HCT116 (cell line): ENCODE measurements at regions of chr10 and their contacts with region 1.

Region 1: GRCh38 chr10:122648599-122649428 is 50.8 kb downstream of the C10orf120 start:
- DNase-seq: peak; percentile 49
- ATAC-seq: peak; percentile 89
- H3K4me3 ChIP-seq: no peak overlapping the region
- H3K27ac ChIP-seq: no peak overlapping the region
- H3K4me1 ChIP-seq: no peaks in the 10 kb centered on the region
- H3K27me3 ChIP-seq: peaks cover 65% of the 10 kb centered on the region
- CTCF ChIP-seq: peak; percentile 84 to 96 (median 95); a peak in 5 of 6 replicates
- POLR2A ChIP-seq: no peak
- RAD21 ChIP-seq: peak; percentile 85

Region 2: DNA sequence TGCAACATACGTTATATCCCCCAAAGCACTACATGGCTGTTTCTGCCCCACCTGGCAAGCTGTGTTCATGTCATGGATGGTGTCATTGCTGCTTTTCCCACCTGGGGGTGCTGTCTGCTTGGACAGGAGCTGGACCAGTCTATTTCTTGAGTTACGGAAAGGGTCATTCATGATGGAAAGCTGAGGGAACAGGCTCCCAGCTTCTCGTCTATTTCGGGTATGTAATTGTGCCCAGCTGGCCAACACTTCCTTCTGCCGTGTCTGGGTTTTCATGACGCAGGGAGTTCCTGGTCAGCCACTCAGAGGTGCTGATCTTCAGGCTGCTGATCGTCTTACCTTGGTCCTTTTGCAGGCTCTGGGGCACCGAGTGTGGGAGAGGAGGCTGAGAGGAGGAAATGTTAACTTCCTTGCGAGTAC is 369.1 kb before region 1 on chr10:
- CTCF ChIA-PET with region 1: interaction called, 14 read pairs
- POLR2A ChIA-PET with region 1: no interaction called
- RAD21 ChIA-PET with region 1: no interaction called
- intact Hi-C with region 1: no loop called
- DNase-seq: peak; percentile 70
- ATAC-seq: peak; percentile 87
- H3K4me3 ChIP-seq: no peak overlapping the region
- H3K27ac ChIP-seq: no peak overlapping the region
- H3K4me1 ChIP-seq: peaks cover 3 to 15% of the 10 kb centered on the region in 2 experiments; a peak in 3 of 4 replicates
- H3K27me3 ChIP-seq: no peaks in the 10 kb centered on the region
- CTCF ChIP-seq: peak; percentile 88 to 98 (median 97); a peak in 5 of 6 replicates
- POLR2A ChIP-seq: no peak
- RAD21 ChIP-seq: peak; percentile 98

Region 3: DNA sequence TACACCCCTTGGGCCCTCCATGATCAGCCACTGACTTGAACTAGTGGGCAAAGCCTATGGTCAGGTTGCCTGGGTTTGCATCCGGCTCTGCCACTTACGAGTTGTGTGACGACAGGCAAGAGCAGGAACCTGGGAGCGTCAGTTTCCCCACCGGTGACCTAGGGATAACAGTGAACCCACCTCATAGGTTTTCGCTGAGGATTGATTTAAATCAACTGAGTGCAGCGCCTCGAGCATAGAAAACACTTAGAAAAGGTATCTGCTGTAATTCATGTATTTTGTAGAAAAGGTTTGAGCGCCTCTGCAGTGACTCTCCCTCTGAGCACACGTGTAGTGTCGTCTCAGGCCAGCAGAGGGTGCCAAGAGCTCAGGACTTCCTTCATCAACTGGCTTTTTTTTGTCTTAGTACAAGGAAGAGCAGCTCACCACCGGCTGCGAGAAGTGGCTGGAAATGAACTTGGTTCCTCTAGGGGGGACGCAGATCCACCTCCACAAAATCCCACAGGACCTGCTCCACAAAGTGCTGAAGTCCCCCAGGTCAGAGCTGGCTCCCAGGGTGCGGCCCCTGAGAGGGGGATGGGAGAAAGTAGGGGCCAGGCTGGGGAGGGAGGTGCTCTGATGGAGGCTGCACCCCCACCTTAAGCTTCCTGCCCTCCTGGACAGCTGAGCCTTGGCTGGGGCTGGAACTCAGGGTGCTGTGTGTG is 350.1 kb before region 1 on chr10:
- CTCF ChIA-PET with region 1: interaction called, 4 read pairs
- POLR2A ChIA-PET with region 1: no interaction called
- RAD21 ChIA-PET with region 1: no interaction called
- intact Hi-C with region 1: loop called (anchors 2 kb)
- DNase-seq: peak; percentile 73
- ATAC-seq: peak; percentile 95
- H3K4me3 ChIP-seq: peak overlapping the region; percentile 22 to 35
- H3K27ac ChIP-seq: no peak overlapping the region; the same call in 1 of the 2 replicates
- H3K4me1 ChIP-seq: peaks cover 0 to 18% of the 10 kb centered on the region in 2 experiments; a peak in 2 of 4 replicates
- H3K27me3 ChIP-seq: no peaks in the 10 kb centered on the region
- CTCF ChIP-seq: peak; percentile 94 to 99 (median 98)
- POLR2A ChIP-seq: no peak
- RAD21 ChIP-seq: peak; percentile 100

Region 4: GRCh38 chr10:122688293-122688994 is 39.6 kb after region 1 on chr10:
- CTCF ChIA-PET with region 1: interaction called, 14 read pairs
- POLR2A ChIA-PET with region 1: no interaction called
- RAD21 ChIA-PET with region 1: no interaction called
- intact Hi-C with region 1: no loop called
- DNase-seq: no peak
- ATAC-seq: peak; percentile 17; the same call in 1 of the 2 replicates
- H3K4me3 ChIP-seq: no peak overlapping the region
- H3K27ac ChIP-seq: no peak overlapping the region
- H3K4me1 ChIP-seq: no peaks in the 10 kb centered on the region
- H3K27me3 ChIP-seq: peaks cover 73% of the 10 kb centered on the region
- CTCF ChIP-seq: peak in 1 of 3 experiments; percentile 15; a peak in 1 of 6 replicates
- POLR2A ChIP-seq: no peak
- RAD21 ChIP-seq: peak; percentile 40

Region 5: DNA sequence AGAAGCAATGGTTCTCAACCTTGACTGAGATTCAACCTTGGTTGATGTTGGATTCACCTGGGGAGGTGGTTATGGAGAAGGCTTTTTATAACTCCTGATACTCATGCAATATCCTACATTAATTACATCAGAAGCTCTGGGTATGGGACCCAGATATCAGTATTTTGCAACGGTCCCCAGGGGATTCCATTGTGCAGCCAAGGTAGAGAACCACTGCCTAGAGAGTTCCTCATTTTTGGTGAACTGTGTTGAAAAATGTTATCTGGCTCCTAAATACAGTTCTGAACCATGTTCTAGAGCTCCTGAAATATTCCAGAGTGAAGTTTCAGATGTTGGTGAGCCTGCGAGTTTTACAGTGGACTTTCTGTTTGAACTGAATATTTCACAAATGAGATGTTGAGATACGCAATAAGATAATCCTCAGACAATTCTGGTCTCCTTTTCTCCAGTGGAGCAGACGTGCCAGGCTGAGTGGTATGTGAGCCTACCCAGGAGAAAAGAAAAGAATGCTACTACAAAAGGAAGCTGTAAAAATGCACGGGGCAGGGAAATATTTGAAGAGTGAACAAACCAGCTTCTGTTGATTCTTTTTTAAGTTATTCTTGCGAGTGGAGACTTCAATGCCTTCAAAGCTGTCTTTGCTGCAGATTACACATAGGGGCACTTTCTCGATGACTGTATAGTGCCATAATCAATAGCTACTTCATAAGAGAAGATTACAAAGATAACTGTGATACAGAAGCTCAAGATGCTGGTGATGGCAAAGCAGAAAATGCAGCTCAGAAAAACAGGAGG is 64.5 kb after region 1 on chr10:
- CTCF ChIA-PET with region 1: no interaction called
- POLR2A ChIA-PET with region 1: no interaction called
- RAD21 ChIA-PET with region 1: no interaction called
- intact Hi-C with region 1: no loop called
- DNase-seq: no peak
- ATAC-seq: no peak
- H3K4me3 ChIP-seq: no peak overlapping the region
- H3K27ac ChIP-seq: no peak overlapping the region
- H3K4me1 ChIP-seq: no peaks in the 10 kb centered on the region
- H3K27me3 ChIP-seq: peaks cover 97% of the 10 kb centered on the region
- CTCF ChIP-seq: no peak
- POLR2A ChIP-seq: no peak
- RAD21 ChIP-seq: no peak

Region 6: DNA sequence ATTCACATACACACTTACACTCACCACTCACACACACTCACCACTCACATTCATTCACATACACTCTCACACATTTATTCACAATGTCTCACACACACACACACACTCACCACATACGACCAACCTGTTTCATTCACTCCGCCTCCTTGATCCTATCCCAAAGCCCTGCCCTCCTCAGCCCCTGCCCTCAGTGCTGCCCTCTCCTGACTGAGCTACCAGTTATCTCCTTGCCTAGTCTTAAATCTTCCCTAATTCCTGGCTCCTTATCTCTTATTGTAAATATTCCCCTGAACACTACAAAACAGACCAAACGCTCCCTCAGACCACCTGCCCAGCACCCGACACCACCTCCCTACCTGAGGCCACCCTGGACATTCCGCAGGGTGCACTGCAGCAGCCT is 77.0 kb after region 1 on chr10:
- CTCF ChIA-PET with region 1: interaction called, 7 read pairs
- POLR2A ChIA-PET with region 1: no interaction called
- RAD21 ChIA-PET with region 1: interaction called in 1 of 2 experiments, 3 read pairs
- intact Hi-C with region 1: loop called (anchors 2 kb)
- DNase-seq: peak; percentile 34
- ATAC-seq: peak; percentile 93
- H3K4me3 ChIP-seq: no peak overlapping the region
- H3K27ac ChIP-seq: no peak overlapping the region
- H3K4me1 ChIP-seq: no peaks in the 10 kb centered on the region
- H3K27me3 ChIP-seq: peaks cover 73% of the 10 kb centered on the region
- CTCF ChIP-seq: peak; percentile 32 to 73 (median 69); a peak in 5 of 6 replicates
- POLR2A ChIP-seq: no peak
- RAD21 ChIP-seq: peak; percentile 39; the same call in 1 of the 2 replicates

Region 7: DNA sequence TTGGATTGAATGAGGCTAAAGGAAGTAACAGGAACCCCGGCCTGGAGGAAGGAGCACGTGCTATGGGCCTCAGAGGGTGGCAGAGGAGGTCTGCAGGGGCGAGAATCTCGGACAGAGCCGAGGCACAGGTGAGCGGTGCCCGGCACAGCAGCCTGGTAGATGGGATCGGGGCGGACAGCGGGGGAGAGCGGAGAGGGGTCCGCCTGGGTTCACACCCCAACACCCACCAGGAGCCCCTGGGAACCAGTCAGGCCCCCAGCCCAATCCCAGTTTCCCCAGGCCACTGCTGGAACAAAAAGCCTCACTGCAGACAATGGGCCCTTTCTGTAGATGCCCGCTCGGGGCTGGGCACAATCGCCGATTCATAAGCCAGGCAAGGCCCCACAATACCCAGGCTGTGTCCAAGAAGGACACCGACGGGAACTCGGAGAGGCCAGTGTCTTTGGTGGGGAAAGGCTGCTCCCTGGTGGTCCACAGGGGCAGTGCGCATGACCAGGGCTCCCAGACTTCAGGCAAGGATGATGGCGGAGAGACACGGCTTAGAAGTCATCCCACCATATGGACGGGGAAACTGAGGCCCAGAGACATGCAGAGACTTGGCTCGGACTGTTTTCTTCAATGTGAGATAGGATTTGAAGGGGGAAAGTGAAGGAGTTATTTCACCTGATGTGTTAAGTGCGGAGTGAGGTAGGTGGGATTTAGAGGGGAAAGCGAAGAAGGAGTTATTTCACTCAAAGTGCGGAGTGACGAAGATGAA is 910.4 kb after region 1 on chr10:
- CTCF ChIA-PET with region 1: no interaction called
- POLR2A ChIA-PET with region 1: no interaction called
- RAD21 ChIA-PET with region 1: no interaction called
- intact Hi-C with region 1: loop called (anchors 5 kb)
- DNase-seq: peak; percentile 60
- ATAC-seq: peak; percentile 97
- H3K4me3 ChIP-seq: no peak overlapping the region
- H3K27ac ChIP-seq: no peak overlapping the region
- H3K4me1 ChIP-seq: 0 out of 4 replicates have a peak, but pooled peaks cover 0 to 3% of the 10 kb centered on the region in 2 experiments
- H3K27me3 ChIP-seq: no peaks in the 10 kb centered on the region
- CTCF ChIP-seq: peak; percentile 95 to 100 (median 100)
- POLR2A ChIP-seq: no peak
- RAD21 ChIP-seq: peak; percentile 99

Region 8: DNA sequence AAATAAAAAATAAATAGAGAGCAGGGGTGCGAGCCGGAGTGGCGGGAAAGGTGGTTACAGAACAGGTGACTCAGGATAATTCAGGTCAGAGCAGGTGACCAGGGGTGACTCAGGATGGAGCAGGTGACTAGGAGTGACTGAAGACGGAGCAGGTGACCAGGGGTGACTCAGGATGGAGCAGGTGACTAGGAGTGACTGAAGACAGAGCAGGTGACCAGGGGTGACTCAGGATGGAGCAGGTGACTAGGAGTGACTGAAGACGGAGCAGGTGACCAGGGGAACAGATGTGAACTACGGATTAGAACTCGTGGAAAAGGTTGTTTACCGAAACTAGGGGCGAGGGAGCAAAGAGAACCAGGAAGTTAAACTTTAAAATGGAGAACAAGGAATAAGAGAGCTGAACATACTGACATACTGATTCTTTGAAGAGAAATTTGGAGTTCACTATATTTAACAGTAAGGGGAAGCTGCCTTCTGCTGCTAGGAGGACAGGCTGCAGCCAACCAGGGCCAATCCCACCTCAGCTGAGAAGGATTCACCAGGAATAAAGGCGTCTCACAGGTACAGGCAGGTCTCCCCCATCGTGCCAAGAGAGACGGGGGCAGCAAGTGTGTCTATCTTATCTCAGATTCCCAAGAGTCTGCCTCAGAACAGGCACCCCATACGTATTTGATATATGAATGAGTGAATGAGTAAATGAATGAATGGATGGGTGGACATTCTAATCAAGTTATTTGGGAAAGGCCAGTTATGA is 1141.5 kb after region 1 on chr10:
- CTCF ChIA-PET with region 1: no interaction called
- POLR2A ChIA-PET with region 1: no interaction called
- RAD21 ChIA-PET with region 1: no interaction called
- intact Hi-C with region 1: no loop called
- DNase-seq: peak; percentile 46
- ATAC-seq: peak; percentile 47; the same call in 1 of the 2 replicates
- H3K4me3 ChIP-seq: no peak overlapping the region
- H3K27ac ChIP-seq: no peak overlapping the region
- H3K4me1 ChIP-seq: no peaks in the 10 kb centered on the region; a peak in 1 of 4 replicates
- H3K27me3 ChIP-seq: peaks cover 41% of the 10 kb centered on the region; the same call in 1 of the 2 replicates
- CTCF ChIP-seq: no peak
- POLR2A ChIP-seq: no peak
- RAD21 ChIP-seq: no peak